ENCODE measurements at regions of chr10 and their contacts with region 1.

Region 1: GRCh38 chr10:13160934-13161856 is at the start of gene MCM10:
- DNase-seq: peak; percentile 98
- H3K4me3 ChIP-seq: peak within 1 kb of the TSS; percentile 42 to 65 (median 47)
- H3K27ac ChIP-seq: no peak within 1 kb of the TSS
- H3K4me1 ChIP-seq: no peaks in the 10 kb centered on the region
- H3K27me3 ChIP-seq: no peaks in the 10 kb centered on the region
- CTCF ChIP-seq: peak; percentile 87 to 92 (median 90)
- POLR2A ChIP-seq: no peak
- total RNA-seq, gene MCM10: 0.15 to 2.0 (median 1.8) TPM

Region 2: DNA sequence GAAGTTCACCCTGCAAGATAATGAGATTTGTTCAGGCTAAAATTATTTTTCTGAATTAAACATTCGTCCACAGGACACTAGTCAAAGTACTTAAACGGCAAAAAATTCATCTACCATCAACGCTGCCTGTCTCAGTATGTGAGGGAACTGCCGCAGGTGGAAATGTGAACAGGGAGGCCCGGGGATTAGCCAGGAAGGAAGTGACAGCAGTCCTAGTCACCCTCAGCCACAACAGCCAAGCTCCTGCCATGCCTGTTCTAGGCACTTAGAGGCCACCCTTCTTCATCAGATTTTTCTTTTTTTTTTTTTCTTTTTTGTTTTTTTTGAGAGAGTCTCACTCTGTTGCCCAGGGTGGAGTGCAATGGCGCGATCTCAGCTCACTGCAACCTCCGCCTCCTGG is 974.9 kb before region 1 on chr10:
- intact Hi-C with region 1: loop called (anchors 5 kb)
- DNase-seq: no peak
- H3K4me3 ChIP-seq: no peak overlapping the region
- H3K27ac ChIP-seq: no peak overlapping the region
- H3K4me1 ChIP-seq: no peaks in the 10 kb centered on the region
- H3K27me3 ChIP-seq: no peaks in the 10 kb centered on the region
- CTCF ChIP-seq: no peak
- POLR2A ChIP-seq: no peak

Region 3: DNA sequence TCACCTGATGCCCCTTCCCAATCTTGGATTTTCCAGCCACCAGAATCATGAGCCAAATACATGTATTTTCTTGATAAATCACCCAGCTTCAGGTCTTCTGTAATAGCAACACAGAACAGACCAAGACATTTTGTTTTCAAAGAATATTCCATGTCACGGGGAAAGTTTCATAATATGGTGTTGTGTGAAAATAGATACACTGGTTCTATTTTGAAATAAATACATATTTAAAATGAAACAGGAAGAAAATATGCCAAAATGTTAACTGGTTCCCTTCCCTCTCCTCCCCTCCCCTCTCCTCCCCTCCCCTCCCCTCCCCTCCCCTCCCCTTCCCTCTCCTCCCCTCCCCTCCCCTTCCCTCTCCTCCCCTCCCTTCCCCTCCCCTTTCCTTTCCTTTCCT is 842.1 kb before region 1 on chr10:
- intact Hi-C with region 1: no loop called
- DNase-seq: no peak
- H3K4me3 ChIP-seq: no peak overlapping the region
- H3K27ac ChIP-seq: no peak overlapping the region
- H3K4me1 ChIP-seq: no peaks in the 10 kb centered on the region
- H3K27me3 ChIP-seq: no peaks in the 10 kb centered on the region
- CTCF ChIP-seq: no peak
- POLR2A ChIP-seq: no peak

Region 4: GRCh38 chr10:13120786-13121499 is 40.3 kb before region 1 on chr10:
- intact Hi-C with region 1: no loop called
- DNase-seq: no peak
- H3K4me3 ChIP-seq: no peak overlapping the region
- H3K27ac ChIP-seq: no peak overlapping the region
- H3K4me1 ChIP-seq: no peaks in the 10 kb centered on the region
- H3K27me3 ChIP-seq: no peaks in the 10 kb centered on the region
- CTCF ChIP-seq: no peak
- POLR2A ChIP-seq: no peak

Region 5: GRCh38 chr10:13184730-13185514 is 23.7 kb after region 1 on chr10:
- intact Hi-C with region 1: no loop called
- DNase-seq: peak in 1 of 2 donors; percentile 62
- H3K4me3 ChIP-seq: no peak overlapping the region
- H3K27ac ChIP-seq: peak overlapping the region in 1 of 2 donors; percentile 66
- H3K4me1 ChIP-seq: no peaks in the 10 kb centered on the region
- H3K27me3 ChIP-seq: no peaks in the 10 kb centered on the region
- CTCF ChIP-seq: no peak
- POLR2A ChIP-seq: no peak

Region 6: DNA sequence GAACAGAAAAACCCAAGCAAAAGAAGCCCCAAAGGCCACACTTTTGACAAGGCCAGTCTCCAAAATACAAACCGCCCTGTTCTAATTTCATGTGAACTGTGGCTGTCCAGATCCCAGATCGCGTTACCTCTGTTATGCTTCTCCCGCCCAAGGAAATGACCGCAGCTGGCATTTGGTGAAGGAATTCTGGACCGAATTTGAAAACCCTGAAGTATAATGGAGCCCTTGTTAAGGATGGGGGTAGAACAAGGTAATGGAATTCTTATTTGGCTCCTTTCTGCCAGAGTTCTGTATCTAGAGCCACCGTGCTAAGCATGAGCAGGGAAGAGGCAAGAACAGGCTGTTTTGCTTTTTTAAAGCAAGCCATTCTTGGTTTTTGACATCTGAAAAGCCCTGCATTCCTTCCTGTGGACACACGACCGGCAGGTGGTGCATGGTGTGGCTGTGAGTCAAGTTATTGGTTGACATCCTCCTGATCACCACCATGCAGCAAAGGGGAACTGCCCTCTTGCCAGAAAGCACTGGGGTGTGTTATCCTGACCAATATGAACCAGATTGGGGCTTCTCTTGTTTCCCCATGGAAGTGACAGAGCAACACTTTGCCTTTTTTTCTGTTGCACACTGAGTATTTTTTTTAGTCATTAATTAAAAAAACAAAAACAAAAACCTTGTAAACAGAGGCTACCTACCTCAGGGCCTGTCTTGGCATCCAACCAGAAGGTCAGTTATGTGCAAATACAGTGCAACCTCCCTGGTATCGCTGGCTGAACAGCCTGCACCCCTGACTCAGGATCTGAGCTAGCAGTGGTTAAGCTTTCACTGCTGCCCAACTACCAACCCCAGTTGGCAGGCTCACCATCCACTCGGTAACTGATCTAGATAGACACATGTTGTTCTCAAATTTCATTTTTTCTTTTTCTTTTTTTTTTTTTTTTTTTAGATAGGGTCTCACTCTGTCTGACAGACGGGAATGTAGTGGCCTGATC is 58.8 kb after region 1 on chr10:
- intact Hi-C with region 1: no loop called
- DNase-seq: peak in 1 of 2 donors; percentile 78
- H3K4me3 ChIP-seq: no peak overlapping the region
- H3K27ac ChIP-seq: peak overlapping the region; percentile 52 to 55
- H3K4me1 ChIP-seq: no peaks in the 10 kb centered on the region
- H3K27me3 ChIP-seq: no peaks in the 10 kb centered on the region
- CTCF ChIP-seq: peak in 1 of 3 donors; percentile 42
- POLR2A ChIP-seq: no peak

Region 7: DNA sequence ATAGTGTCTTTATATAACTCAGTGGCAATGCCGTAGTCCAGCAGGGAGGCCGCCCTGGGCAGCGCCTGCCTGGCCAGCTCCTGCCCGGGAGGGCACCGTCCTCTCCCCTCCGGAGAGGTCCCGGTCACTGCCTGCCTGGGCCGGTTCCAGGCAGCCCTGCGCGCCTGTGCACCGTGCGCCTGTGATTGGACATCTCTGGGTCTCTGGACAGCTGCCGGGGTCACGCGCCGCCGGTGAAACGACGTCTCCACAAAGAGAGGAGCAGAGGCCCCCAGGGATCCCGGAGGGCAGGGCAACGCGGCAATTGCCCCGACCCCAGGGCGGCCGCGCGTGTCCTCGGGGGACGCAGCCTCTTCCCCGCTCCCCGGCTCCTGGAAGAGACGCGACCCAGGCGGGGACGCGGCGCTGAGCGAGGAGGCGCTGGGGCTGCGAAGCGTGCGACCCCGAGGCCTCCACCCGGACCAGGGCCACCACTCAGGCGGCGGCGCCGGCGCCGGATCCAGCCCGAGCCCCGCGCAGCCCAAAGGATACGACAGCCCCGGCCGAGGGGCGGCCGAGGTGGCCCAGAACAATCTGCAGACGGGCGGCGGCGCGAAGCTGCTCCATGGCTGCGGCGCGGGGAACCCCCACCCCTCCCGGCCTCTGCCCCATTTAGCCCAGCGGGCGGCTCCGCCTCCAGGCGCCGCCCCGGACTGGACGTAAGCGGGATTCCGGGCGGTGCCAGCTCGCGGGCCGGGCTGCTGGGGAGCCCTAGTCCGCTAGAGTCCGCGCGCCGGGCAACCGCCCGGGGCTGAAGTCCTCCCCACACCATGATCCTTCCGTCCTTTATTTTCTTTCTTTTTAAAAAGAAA is 138.5 kb after region 1 on chr10 and contains the start of gene PHYH:
- intact Hi-C with region 1: loop called (anchors 10 kb)
- DNase-seq: peak; percentile 79 to 84
- H3K4me3 ChIP-seq: peak within 1 kb of the TSS; percentile 86 to 88 (median 88)
- H3K27ac ChIP-seq: peak within 1 kb of the TSS; percentile 95 to 97
- H3K4me1 ChIP-seq: peaks cover 0 to 4% of the 10 kb centered on the region in 2 donors
- H3K27me3 ChIP-seq: no peaks in the 10 kb centered on the region
- CTCF ChIP-seq: no peak
- POLR2A ChIP-seq: peak; percentile 63
- total RNA-seq, gene PHYH: 23.7 to 74.7 (median 26.9) TPM